ENCODE measurements at regions of chr9 and their contacts with region 1.

Region 1: DNA sequence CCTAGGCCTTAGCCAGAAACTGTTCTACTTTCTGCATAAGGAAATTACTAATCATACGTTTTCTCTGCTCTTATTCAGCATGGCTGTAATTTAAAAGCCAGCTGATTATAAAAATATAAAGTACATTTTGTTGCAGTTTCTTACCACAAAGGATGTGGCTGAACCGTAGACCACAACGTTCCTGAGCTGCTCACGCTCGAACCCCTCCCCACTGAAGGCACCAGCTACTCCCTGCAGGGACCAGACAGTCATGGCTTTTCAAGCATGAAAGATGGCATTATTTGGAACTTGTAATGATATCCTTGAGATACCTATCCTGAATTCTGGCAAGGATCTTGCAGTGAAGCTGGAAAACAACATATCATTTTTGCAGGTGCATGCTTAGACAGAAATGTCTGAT is 91.8 kb upstream of the DMRT1 start:
- DNase-seq: no peak
- ATAC-seq: no peak
- H3K4me3 ChIP-seq: no peak overlapping the region
- H3K27ac ChIP-seq: peak overlapping the region in 5 of 10 donors; percentile 22 to 73 (median 59)
- H3K4me1 ChIP-seq: peaks cover 6 to 58% (median 43%) of the 10 kb centered on the region in 9 donors
- H3K27me3 ChIP-seq: no peaks in the 10 kb centered on the region
- CTCF ChIP-seq: no peak

Region 2: DNA sequence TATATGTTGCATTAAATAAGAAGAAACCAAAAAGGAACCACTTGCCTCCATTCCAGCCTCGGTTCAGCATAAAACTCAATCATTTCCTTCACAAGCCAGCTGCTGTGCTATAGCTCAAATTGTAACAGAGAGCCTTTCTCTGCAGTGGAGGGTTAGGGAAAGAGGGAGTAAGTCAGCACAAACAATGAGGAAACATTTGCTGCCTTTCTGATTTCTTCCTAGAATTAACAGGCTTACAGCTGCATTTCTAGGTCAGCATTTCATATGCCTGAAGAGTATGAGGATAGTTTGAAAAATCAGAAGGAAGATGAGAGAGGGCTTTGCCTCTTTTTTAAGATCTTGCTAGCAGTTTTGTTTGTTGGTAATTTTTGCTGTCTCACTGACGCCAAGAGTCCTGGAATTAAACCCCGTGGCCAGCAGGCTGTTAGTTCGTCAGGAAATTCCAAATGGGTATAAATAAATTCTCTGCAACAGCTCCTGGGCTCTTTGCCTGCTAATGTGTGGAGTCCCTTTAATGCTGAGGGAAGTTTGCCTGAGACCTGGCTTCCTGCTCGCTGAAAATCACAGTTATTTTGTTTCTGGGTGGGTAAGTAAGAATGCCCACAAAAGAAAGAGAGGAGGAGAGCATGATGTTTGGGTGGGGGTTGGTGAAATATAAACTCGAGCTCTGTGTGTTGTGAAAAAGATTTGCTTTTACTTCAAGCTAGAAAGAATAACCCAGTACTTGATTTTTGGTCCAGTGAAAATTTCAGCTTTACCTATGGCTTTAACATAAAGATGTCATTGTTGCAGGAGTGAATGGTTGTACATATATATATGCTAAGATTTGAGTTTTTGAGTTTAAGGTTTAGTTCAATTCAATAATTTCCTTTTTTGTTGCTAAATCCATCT is 56.3 kb before region 1 on chr9:
- intact Hi-C with region 1: loop called in 2 of 10 experiments (anchors 5 kb)
- DNase-seq: peak in 1 of 2 donors; percentile 81
- ATAC-seq: peak; percentile 53 to 87 (median 76)
- H3K4me3 ChIP-seq: peak overlapping the region in 9 of 10 donors; percentile 26 to 55 (median 46)
- H3K27ac ChIP-seq: peak overlapping the region; percentile 84 to 95 (median 90)
- H3K4me1 ChIP-seq: peaks cover 6 to 83% (median 67%) of the 10 kb centered on the region in 9 donors
- H3K27me3 ChIP-seq: no peaks in the 10 kb centered on the region
- CTCF ChIP-seq: no peak

Region 3: GRCh38 chr9:700365-701282 is 49.1 kb before region 1 on chr9:
- intact Hi-C with region 1: loop called in 3 of 10 experiments (anchors 5 kb)
- DNase-seq: no peak
- ATAC-seq: no peak
- H3K4me3 ChIP-seq: no peak overlapping the region
- H3K27ac ChIP-seq: peak overlapping the region in 4 of 10 donors; percentile 5 to 49 (median 26)
- H3K4me1 ChIP-seq: peaks cover 3 to 87% (median 48%) of the 10 kb centered on the region in 9 donors
- H3K27me3 ChIP-seq: no peaks in the 10 kb centered on the region
- CTCF ChIP-seq: no peak

Region 4: DNA sequence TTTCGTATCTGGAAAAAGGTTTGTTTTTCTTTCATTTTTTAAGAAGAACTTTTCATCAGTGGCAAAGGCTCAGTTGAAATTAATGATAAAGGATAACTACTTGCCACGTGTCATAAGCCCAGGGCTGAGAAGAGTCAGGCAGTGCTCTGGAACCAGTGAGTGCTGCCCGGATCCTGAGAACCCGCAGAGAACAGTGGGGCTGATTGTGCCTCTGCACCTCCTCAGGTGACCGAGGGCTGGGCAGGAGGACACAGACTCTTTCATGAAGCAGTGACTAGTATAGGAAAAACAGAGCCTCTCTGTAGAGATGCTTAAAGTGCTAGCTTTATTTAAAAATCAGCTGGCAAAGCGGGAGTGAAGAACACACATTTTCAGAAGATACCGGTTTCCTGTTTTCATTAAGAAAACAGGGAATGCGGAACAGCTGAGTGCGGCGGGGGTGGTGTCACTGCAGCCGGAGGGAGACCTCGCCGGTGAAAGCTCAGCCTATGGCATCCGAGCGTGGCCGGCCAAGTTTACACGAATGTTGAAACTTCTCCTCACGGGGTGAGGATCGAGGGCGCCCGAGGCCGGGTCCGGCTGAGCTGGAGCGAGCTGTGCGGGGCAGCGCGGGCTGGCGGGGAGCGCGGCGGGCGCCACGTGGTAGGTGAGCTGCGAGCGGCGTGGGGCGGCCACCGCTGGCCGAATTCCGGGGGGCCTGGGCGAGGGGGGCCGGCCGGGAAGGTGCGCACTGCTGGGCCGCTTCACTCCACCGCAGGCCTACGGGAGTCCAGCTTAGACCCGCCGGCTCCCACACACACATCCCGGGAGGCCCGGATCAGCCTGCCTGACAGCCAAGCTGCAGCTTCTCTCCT is 42.9 kb before region 1 on chr9:
- intact Hi-C with region 1: loop called in 4 of 10 experiments (anchors 2 to 5 kb)
- DNase-seq: peak; percentile 53 to 69
- ATAC-seq: peak; percentile 61 to 82 (median 69)
- H3K4me3 ChIP-seq: peak overlapping the region in 9 of 10 donors; percentile 32 to 64 (median 55)
- H3K27ac ChIP-seq: peak overlapping the region; percentile 13 to 80 (median 68)
- H3K4me1 ChIP-seq: peaks cover 6 to 60% (median 35%) of the 10 kb centered on the region in 9 donors
- H3K27me3 ChIP-seq: no peaks in the 10 kb centered on the region
- CTCF ChIP-seq: no peak

Region 5: GRCh38 chr9:714675-715074 is 35.0 kb before region 1 on chr9:
- intact Hi-C with region 1: loop called in 3 of 10 experiments (anchors 2 to 5 kb)
- DNase-seq: no peak
- ATAC-seq: no peak
- H3K4me3 ChIP-seq: no peak overlapping the region
- H3K27ac ChIP-seq: peak overlapping the region in 9 of 10 donors; percentile 5 to 80 (median 46)
- H3K4me1 ChIP-seq: peaks cover 7 to 73% (median 50%) of the 10 kb centered on the region in 9 donors
- H3K27me3 ChIP-seq: no peaks in the 10 kb centered on the region
- CTCF ChIP-seq: no peak

Measured in heart right ventricle (tissue), 16 donors.